CD4-positive, alpha-beta T cell (primary cell): ENCODE measurements at regions of chr2 and their contacts with region 1.

Region 1: GRCh38 chr2:230319211-230319862 is 7.7 kb upstream of the SP140L start:
- DNase-seq: peak; percentile 50 to 97 (median 69)
- ATAC-seq: peak; percentile 95
- H3K4me3 ChIP-seq: peak overlapping the region; percentile 24
- H3K4me3 Mint-ChIP-seq: peak overlapping the region; percentile 72
- H3K27ac ChIP-seq: peak overlapping the region; percentile 62 to 69
- H3K27ac Mint-ChIP-seq: peak overlapping the region; percentile 87
- H3K4me1 ChIP-seq: peaks cover 61% of the 10 kb centered on the region
- H3K4me1 Mint-ChIP-seq: peaks cover 88% of the 10 kb centered on the region
- H3K27me3 ChIP-seq: no peaks in the 10 kb centered on the region
- H3K27me3 Mint-ChIP-seq: no peaks in the 10 kb centered on the region
- CTCF ChIP-seq: no peak

Region 2: GRCh38 chr2:230262246-230262645 is 57.1 kb before region 1 on chr2:
- CTCF ChIA-PET with region 1: no interaction called
- POLR2A ChIA-PET with region 1: interaction called, 6 read pairs
- intact Hi-C with region 1: loop called in 1 of 2 experiments (anchors 1 kb)
- DNase-seq: peak in 3 of 14 experiments; percentile 42 to 73 (median 50)
- ATAC-seq: peak; percentile 94
- H3K4me3 ChIP-seq: peak overlapping the region; percentile 19
- H3K4me3 Mint-ChIP-seq: peak overlapping the region; percentile 40
- H3K27ac ChIP-seq: peak overlapping the region in 1 of 2 donors; percentile 48
- H3K27ac Mint-ChIP-seq: peak overlapping the region; percentile 76
- H3K4me1 ChIP-seq: peaks cover 3% of the 10 kb centered on the region
- H3K4me1 Mint-ChIP-seq: peaks cover 49% of the 10 kb centered on the region
- H3K27me3 ChIP-seq: no peaks in the 10 kb centered on the region
- H3K27me3 Mint-ChIP-seq: no peaks in the 10 kb centered on the region
- CTCF ChIP-seq: no peak

Region 3: GRCh38 chr2:230447455-230448451 is 128.4 kb after region 1 on chr2:
- CTCF ChIA-PET with region 1: no interaction called
- POLR2A ChIA-PET with region 1: no interaction called
- intact Hi-C with region 1: no loop called
- DNase-seq: peak in 3 of 14 experiments; percentile 62 to 69 (median 66)
- ATAC-seq: peak; percentile 86
- H3K4me3 ChIP-seq: no peak overlapping the region
- H3K4me3 Mint-ChIP-seq: peak overlapping the region; percentile 3
- H3K27ac ChIP-seq: peak overlapping the region; percentile 41 to 42
- H3K27ac Mint-ChIP-seq: peak overlapping the region; percentile 75
- H3K4me1 ChIP-seq: peaks cover 33% of the 10 kb centered on the region
- H3K4me1 Mint-ChIP-seq: peaks cover 60% of the 10 kb centered on the region
- H3K27me3 ChIP-seq: no peaks in the 10 kb centered on the region
- H3K27me3 Mint-ChIP-seq: no peaks in the 10 kb centered on the region
- CTCF ChIP-seq: no peak